Panc1 (cell line): ENCODE measurements at regions of chr1 and their contacts with region 1.

Region 1: DNA sequence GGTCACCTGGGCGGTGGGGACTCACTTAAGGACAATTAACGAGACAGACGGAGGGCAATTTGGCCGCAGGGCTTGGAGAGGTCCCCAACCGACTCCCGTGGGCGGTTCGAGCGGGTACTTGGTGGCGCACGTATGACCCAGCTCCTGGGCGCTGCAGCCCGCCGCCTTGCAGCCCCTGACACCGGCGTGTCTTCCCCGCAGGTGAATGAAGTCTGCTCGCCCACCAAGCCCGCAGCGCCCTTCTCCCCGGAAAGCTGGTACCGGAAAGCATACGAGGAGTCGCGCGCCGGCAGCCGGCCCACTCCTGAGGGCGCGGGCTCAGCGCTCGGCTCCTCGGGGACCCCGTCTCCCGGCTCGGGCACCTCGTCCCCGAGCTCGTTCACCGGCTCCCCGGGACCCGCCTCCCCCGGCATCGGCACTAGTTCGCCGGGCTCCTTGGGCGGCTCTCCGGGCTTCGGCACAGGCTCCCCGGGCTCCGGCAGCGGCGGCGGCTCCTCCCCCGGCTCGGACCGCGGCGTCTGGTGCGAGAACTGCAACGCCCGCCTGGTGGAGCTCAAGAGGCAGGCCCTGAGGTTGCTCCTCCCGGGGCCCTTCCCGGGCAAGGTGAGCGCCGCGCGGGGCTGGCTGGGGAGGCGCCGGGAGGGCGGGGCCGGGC is 1.4 kb downstream of the KIF26B start:
- DNase-seq: peak; percentile 24
- ATAC-seq: peak; percentile 91
- H3K4me3 ChIP-seq: peak overlapping the region; percentile 57 to 66
- H3K27ac ChIP-seq: no peak overlapping the region
- H3K4me1 ChIP-seq: peaks cover 9% of the 10 kb centered on the region
- H3K27me3 ChIP-seq: peaks cover 32% of the 10 kb centered on the region
- CTCF ChIP-seq: peak; percentile 96

Region 2: DNA sequence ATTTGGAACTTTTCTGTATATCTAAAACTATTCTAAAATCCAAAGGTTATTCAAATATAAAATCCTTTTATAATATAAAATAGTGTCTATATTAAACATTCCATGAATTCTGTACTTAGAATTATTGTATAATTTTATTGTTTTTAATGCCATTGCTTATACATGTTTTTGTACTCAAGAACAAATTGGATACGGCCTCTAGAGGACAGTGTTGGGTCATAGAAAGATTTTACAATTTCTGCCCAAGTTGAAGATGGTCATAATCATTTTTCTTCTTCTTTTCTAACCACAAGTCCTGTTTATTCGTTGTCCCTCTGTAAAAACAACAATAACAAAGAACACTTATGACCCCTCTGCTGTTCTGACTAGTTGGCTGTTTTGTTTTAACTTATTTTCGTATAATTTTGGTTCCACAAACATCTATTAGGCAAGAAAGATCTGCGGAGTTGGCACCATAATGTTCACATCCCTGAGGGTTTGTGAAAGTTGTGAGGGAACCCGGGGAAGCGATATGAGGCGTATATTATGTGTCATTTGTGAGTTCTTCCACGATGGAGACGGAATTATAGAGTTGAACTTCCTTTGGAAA is 77.1 kb before region 1 on chr1:
- CTCF ChIA-PET with region 1: no interaction called
- POLR2A ChIA-PET with region 1: no interaction called
- in situ Hi-C with region 1: no loop called
- intact Hi-C with region 1: loop called (anchors 5 kb)
- DNase-seq: no peak
- ATAC-seq: no peak; the same call in 1 of the 2 replicates
- H3K4me3 ChIP-seq: no peak overlapping the region
- H3K27ac ChIP-seq: no peak overlapping the region
- H3K4me1 ChIP-seq: no peaks in the 10 kb centered on the region
- H3K27me3 ChIP-seq: no peaks in the 10 kb centered on the region
- CTCF ChIP-seq: peak; percentile 75

Region 3: GRCh38 chr1:245345191-245345884 is 189.1 kb after region 1 on chr1:
- CTCF ChIA-PET with region 1: interaction called, 14 read pairs
- POLR2A ChIA-PET with region 1: no interaction called
- in situ Hi-C with region 1: no loop called
- intact Hi-C with region 1: no loop called
- DNase-seq: no peak
- ATAC-seq: peak; percentile 87
- H3K4me3 ChIP-seq: peak overlapping the region; percentile 43 to 68
- H3K27ac ChIP-seq: peak overlapping the region; percentile 34; the same call in 1 of the 2 replicates
- H3K4me1 ChIP-seq: no peaks in the 10 kb centered on the region
- H3K27me3 ChIP-seq: peaks cover 5% of the 10 kb centered on the region
- CTCF ChIP-seq: peak; percentile 53

Region 4: DNA sequence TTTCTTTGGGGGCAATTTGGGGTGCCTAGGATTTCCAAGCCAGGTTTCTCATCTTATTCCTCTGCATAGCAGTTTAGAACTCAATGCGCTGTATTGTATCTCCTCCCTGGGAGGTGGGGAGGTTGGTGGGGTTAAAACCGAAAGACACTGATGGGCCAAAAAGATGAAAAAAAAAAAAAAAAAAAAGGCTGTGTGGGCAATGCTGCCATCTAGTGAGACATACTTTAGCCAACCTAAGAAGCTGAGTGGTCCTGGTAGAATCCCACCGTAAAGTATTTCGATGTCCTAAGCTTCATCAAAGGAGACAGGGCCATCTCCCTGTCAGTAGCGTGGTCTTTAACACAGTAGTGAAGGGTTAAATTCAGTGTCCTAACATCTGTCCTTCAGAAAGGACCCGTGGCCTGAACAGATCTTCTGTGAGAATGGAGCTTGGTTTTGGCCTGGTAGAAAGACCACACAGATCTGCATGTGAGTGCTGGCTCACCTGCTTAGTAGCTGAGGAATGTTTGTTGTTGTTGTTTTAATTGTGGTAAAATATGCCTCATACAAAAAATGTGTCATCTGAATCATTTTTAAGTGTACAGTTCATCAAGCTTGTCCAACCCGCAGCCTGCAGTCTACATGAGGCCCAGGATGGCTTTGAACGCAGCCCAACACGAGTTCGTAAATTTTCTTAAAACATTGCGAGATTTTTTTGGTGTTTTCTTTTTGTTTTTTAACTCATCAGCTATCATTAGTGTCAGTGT is 224.8 kb after region 1 on chr1:
- CTCF ChIA-PET with region 1: interaction called, 12 read pairs
- POLR2A ChIA-PET with region 1: no interaction called
- in situ Hi-C with region 1: no loop called
- intact Hi-C with region 1: loop called (anchors 5 kb)
- DNase-seq: no peak
- ATAC-seq: no peak
- H3K4me3 ChIP-seq: no peak overlapping the region
- H3K27ac ChIP-seq: no peak overlapping the region
- H3K4me1 ChIP-seq: no peaks in the 10 kb centered on the region
- H3K27me3 ChIP-seq: peaks cover 12% of the 10 kb centered on the region
- CTCF ChIP-seq: peak; percentile 72

Region 5: DNA sequence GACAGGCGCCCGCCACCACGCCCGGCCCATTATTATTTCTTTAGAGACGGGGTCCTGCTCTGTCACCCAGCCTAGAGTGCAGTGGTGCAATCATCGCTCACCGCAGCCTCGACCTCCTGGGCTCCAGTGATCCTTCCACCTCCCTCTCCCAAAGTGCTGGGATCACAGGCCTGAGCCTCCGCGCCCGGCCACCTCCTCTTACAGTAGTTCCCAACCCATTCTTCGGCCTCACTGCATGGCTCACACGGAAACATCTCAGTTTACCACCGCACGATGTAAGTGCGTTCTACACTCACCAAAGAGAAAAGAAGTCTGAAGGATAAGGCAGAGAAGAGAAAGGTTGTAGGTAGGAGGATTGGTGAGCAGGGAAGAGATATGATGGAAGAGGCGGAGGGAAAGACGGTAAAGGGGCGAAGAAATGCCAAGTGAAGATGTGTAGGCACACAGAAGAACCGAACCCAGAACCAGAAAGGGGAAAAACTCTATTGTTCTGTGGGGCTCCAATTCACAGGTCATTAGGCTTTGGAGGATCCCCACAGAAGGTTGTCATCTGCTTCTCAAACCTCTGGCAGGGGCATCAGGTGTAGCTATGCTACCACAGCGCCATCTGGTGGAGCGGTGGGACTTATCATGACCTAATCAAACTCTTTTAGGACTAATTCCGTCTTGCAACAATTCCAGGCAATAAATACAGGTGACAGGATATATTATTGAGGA is 846.7 kb after region 1 on chr1:
- CTCF ChIA-PET with region 1: interaction called, 3 read pairs
- POLR2A ChIA-PET with region 1: no interaction called
- in situ Hi-C with region 1: no loop called
- intact Hi-C with region 1: loop called (anchors 2 kb)
- DNase-seq: peak; percentile 61
- ATAC-seq: peak; percentile 88
- H3K4me3 ChIP-seq: no peak overlapping the region
- H3K27ac ChIP-seq: no peak overlapping the region
- H3K4me1 ChIP-seq: peaks cover 4% of the 10 kb centered on the region; the same call in 1 of the 2 replicates
- H3K27me3 ChIP-seq: no peaks in the 10 kb centered on the region
- CTCF ChIP-seq: peak; percentile 90

Region 6: GRCh38 chr1:246280551-246280950 is 1124.3 kb after region 1 on chr1:
- CTCF ChIA-PET with region 1: interaction called, 7 read pairs
- POLR2A ChIA-PET with region 1: no interaction called
- in situ Hi-C with region 1: no loop called
- intact Hi-C with region 1: loop called (anchors 10 kb)
- DNase-seq: no peak
- ATAC-seq: no peak
- H3K4me3 ChIP-seq: no peak overlapping the region
- H3K27ac ChIP-seq: no peak overlapping the region
- H3K4me1 ChIP-seq: no peaks in the 10 kb centered on the region
- H3K27me3 ChIP-seq: no peaks in the 10 kb centered on the region
- CTCF ChIP-seq: peak; percentile 42; the same call in 1 of the 2 replicates

Region 7: GRCh38 chr1:246497331-246497915 is 1341.2 kb after region 1 on chr1:
- CTCF ChIA-PET with region 1: no interaction called
- POLR2A ChIA-PET with region 1: no interaction called
- in situ Hi-C with region 1: no loop called
- intact Hi-C with region 1: loop called (anchors 5 kb)
- DNase-seq: peak; percentile 48
- ATAC-seq: peak; percentile 52; the same call in 1 of the 2 replicates
- H3K4me3 ChIP-seq: no peak overlapping the region
- H3K27ac ChIP-seq: no peak overlapping the region
- H3K4me1 ChIP-seq: no peaks in the 10 kb centered on the region
- H3K27me3 ChIP-seq: no peaks in the 10 kb centered on the region
- CTCF ChIP-seq: peak; percentile 76